Endothelial cell of umbilical vein (primary cell): ENCODE measurements at regions of chr5 and their contacts with region 1.

Region 1: GRCh38 chr5:137754126-137754960 is at the start of gene HNRNPA0:
- DNase-seq: peak; percentile 98
- H3K4me3 ChIP-seq: peak within 1 kb of the TSS; percentile 88 to 99 (median 94)
- H3K27ac ChIP-seq: peak within 1 kb of the TSS; percentile 92
- H3K4me1 ChIP-seq: peaks cover 18% of the 10 kb centered on the region
- H3K27me3 ChIP-seq: peaks cover 0 to 2% of the 10 kb centered on the region in 2 experiments
- CTCF ChIP-seq: no peak
- POLR2A ChIP-seq: peak; percentile 97
- total RNA-seq, gene HNRNPA0: 37.5 and 37.9 TPM in 2 replicates

Region 2: GRCh38 chr5:137521246-137521645 is 233.1 kb before region 1 on chr5:
- CTCF ChIA-PET with region 1: no interaction called
- POLR2A ChIA-PET with region 1: no interaction called
- dilution Hi-C with region 1: no loop called
- intact Hi-C with region 1: no loop called
- DNase-seq: no peak
- H3K4me3 ChIP-seq: no peak overlapping the region
- H3K27ac ChIP-seq: no peak overlapping the region
- H3K4me1 ChIP-seq: no peaks in the 10 kb centered on the region
- H3K27me3 ChIP-seq: peaks cover 12 to 15% of the 10 kb centered on the region in 2 experiments
- CTCF ChIP-seq: no peak
- POLR2A ChIP-seq: no peak

Region 3: GRCh38 chr5:137563646-137564397 is 190.5 kb before region 1 on chr5:
- CTCF ChIA-PET with region 1: interaction called, 3 read pairs
- POLR2A ChIA-PET with region 1: no interaction called
- dilution Hi-C with region 1: no loop called
- intact Hi-C with region 1: loop called (anchors 5 kb)
- DNase-seq: peak; percentile 95
- H3K4me3 ChIP-seq: peak overlapping the region in 1 of 3 experiments; percentile 0
- H3K27ac ChIP-seq: peak overlapping the region; percentile 83
- H3K4me1 ChIP-seq: peaks cover 40% of the 10 kb centered on the region
- H3K27me3 ChIP-seq: no peaks in the 10 kb centered on the region
- CTCF ChIP-seq: no peak
- POLR2A ChIP-seq: no peak

Region 4: GRCh38 chr5:137735555-137736284 is 18.6 kb before region 1 on chr5 and contains the start of gene KLHL3:
- CTCF ChIA-PET with region 1: interaction called, 24 read pairs
- POLR2A ChIA-PET with region 1: interaction called, 4 read pairs
- dilution Hi-C with region 1: no loop called
- intact Hi-C with region 1: loop called (anchors 2 kb)
- DNase-seq: peak; percentile 81
- H3K4me3 ChIP-seq: peak within 1 kb of the TSS; percentile 56 to 74 (median 64)
- H3K27ac ChIP-seq: peak within 1 kb of the TSS; percentile 76
- H3K4me1 ChIP-seq: peaks cover 40% of the 10 kb centered on the region
- H3K27me3 ChIP-seq: no peaks in the 10 kb centered on the region
- CTCF ChIP-seq: peak; percentile 16 to 26
- POLR2A ChIP-seq: peak; percentile 71
- total RNA-seq, gene KLHL3: 13.6 and 13.9 TPM in 2 replicates

Region 5: GRCh38 chr5:137822158-137822764 is 67.9 kb after region 1 on chr5:
- CTCF ChIA-PET with region 1: no interaction called
- POLR2A ChIA-PET with region 1: no interaction called
- dilution Hi-C with region 1: no loop called
- intact Hi-C with region 1: loop called (anchors 2 kb)
- DNase-seq: peak; percentile 31
- H3K4me3 ChIP-seq: no peak overlapping the region
- H3K27ac ChIP-seq: no peak overlapping the region
- H3K4me1 ChIP-seq: no peaks in the 10 kb centered on the region
- H3K27me3 ChIP-seq: peaks cover 10 to 19% of the 10 kb centered on the region in 2 experiments
- CTCF ChIP-seq: peak; percentile 17 to 51
- POLR2A ChIP-seq: no peak

Region 6: DNA sequence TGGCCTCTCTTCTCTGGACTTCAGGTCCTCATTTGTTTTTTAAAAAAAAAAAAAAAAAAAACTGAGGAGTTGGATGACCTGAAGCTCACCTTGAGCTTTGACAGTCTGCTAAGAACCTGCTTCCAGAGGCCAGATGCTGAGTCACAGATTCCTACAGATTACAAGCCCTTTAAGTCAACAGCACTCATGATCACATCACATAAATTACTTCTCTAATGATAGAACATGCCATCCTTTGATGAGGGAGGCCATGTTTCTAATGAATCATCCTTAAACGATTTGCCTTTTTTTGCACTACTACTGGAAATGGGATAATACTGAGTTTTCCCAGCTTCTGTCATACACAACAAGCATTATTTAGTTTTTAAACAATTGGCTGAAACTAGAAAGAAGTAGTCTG is 79.1 kb after region 1 on chr5:
- CTCF ChIA-PET with region 1: no interaction called
- POLR2A ChIA-PET with region 1: no interaction called
- dilution Hi-C with region 1: no loop called
- intact Hi-C with region 1: no loop called
- DNase-seq: no peak
- H3K4me3 ChIP-seq: no peak overlapping the region
- H3K27ac ChIP-seq: no peak overlapping the region
- H3K4me1 ChIP-seq: peaks cover 2% of the 10 kb centered on the region
- H3K27me3 ChIP-seq: peaks cover 5 to 8% of the 10 kb centered on the region in 2 experiments
- CTCF ChIP-seq: no peak
- POLR2A ChIP-seq: no peak

Region 7: GRCh38 chr5:138128334-138128733 is 374.0 kb after region 1 on chr5:
- CTCF ChIA-PET with region 1: interaction called, 3 read pairs
- POLR2A ChIA-PET with region 1: no interaction called
- dilution Hi-C with region 1: no loop called
- intact Hi-C with region 1: loop called (anchors 2 kb)
- DNase-seq: peak; percentile 70
- H3K4me3 ChIP-seq: no peak overlapping the region
- H3K27ac ChIP-seq: no peak overlapping the region
- H3K4me1 ChIP-seq: peaks cover 8% of the 10 kb centered on the region
- H3K27me3 ChIP-seq: no peaks in the 10 kb centered on the region
- CTCF ChIP-seq: no peak
- POLR2A ChIP-seq: no peak